ENCODE measurements at regions of chr19 and their contacts with region 1.

Region 1: GRCh38 chr19:17859533-17860330 is at the start of gene RPL18A:
- DNase-seq: peak; percentile 99
- ATAC-seq: peak; percentile 97
- total RNA-seq, gene RPL18A: 723 TPM

Region 2: DNA sequence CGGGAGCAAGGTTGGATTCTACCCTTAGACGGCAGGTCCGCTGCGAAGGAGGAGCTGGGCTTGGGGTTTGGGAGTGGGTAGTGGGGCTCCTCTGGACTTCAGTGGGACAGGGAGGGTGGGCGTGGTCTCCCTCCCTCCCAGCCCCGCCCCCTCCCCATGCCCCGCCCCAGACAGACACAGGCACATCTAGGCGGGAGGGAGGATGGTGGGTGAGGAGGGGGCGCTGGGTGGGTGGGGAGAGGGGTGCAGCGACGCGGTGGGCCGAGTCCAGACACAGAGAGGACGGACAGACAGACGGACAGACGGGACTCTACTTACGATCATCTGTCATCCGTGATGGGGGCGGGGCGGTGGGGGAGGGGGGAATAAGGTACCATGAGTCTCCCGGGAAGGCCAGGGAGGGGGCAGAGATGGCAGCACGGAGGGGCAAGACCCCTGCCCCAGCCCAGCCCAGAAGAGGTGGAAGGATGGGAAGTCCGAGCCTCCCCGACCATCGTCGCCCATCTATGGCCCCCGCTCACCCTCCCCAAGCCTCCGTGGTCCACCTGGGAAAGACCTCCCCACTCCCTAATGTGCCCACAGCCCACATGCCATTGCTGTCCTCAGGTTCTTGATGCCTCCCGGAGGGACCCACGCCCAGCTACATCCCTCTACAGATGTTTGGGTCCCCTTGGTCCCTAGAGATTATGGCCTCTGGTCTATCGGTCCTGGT is 236.4 kb before region 1 on chr19:
- intact Hi-C with region 1: no loop called
- DNase-seq: peak; percentile 17
- ATAC-seq: no peak

Region 3: DNA sequence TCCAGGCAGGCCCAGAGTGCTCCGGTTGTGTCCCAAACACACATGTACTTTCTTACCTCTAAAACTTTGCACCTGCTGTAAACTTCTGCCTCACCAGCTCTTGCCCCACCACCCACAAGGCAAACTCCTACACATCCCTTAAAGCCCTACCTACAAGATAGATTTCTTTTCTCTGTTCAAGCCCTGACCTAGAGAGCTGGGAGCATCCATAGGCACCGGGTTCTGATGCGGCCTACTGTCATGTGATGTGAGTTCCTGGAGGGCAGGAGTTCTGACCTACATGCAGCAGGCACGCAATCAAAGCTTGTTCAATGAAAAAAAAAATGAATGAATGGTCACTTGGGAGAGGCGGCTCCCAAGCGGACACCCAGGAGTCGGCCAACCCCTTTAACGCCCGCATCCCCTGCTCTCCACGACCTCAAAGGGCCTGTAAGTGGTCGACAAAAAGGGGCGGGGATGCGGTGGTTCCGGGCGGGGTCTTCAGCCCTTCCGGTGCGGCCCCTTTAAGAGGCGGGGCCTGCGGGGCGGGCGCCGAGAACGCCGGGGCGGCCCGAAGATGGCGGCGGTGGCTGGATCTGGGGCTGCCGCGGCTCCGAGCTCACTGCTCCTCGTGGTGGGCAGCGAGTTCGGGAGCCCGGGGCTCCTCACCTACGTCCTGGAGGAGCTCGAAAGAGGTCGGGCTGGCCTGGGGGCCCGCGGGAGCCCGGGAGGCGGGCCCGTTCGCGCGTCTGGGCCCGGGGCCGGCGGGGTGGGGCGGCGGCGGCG is 140.6 kb before region 1 on chr19 and contains the start of gene MAP1S:
- intact Hi-C with region 1: loop called (anchors 10 kb)
- DNase-seq: peak; percentile 82
- ATAC-seq: peak; percentile 83
- total RNA-seq, gene MAP1S: 25.1 TPM

Region 4: GRCh38 chr19:17938092-17938845 is 78.5 kb after region 1 on chr19:
- intact Hi-C with region 1: loop called (anchors 5 kb)
- DNase-seq: peak; percentile 87
- ATAC-seq: peak; percentile 87

Region 5: GRCh38 chr19:17996826-17997316 is 137.1 kb after region 1 on chr19:
- intact Hi-C with region 1: loop called (anchors 10 kb)
- DNase-seq: peak; percentile 91
- ATAC-seq: peak; percentile 86

Measured in Right ventricle myocardium superior (tissue), 1 donor.